ENCODE measurements at regions of chr2 and their contacts with region 1.

Region 1: GRCh38 chr2:155310589-155310988 is 612.1 kb downstream of the KCNJ3 start:
- DNase-seq: no peak
- ATAC-seq: no peak
- H3K4me3 Mint-ChIP-seq: no peak overlapping the region
- H3K27ac Mint-ChIP-seq: no peak overlapping the region
- H3K4me1 Mint-ChIP-seq: no peaks in the 10 kb centered on the region
- H3K27me3 Mint-ChIP-seq: no peaks in the 10 kb centered on the region

Region 2: GRCh38 chr2:154452906-154453493 is 857.6 kb before region 1 on chr2:
- CTCF ChIA-PET with region 1: no interaction called
- POLR2A ChIA-PET with region 1: no interaction called
- intact Hi-C with region 1: loop called in 1 of 2 experiments (anchors 5 kb)
- DNase-seq: no peak
- ATAC-seq: no peak
- H3K4me3 Mint-ChIP-seq: no peak overlapping the region
- H3K27ac Mint-ChIP-seq: no peak overlapping the region
- H3K4me1 Mint-ChIP-seq: peaks cover 5% of the 10 kb centered on the region
- H3K27me3 Mint-ChIP-seq: no peaks in the 10 kb centered on the region

Region 3: GRCh38 chr2:154623819-154624218 is 686.8 kb before region 1 on chr2:
- CTCF ChIA-PET with region 1: no interaction called
- POLR2A ChIA-PET with region 1: no interaction called
- intact Hi-C with region 1: loop called in 1 of 2 experiments (anchors 2 kb)
- DNase-seq: peak; percentile 20
- ATAC-seq: no peak
- H3K4me3 Mint-ChIP-seq: no peak overlapping the region
- H3K27ac Mint-ChIP-seq: no peak overlapping the region
- H3K4me1 Mint-ChIP-seq: no peaks in the 10 kb centered on the region
- H3K27me3 Mint-ChIP-seq: peaks cover 2% of the 10 kb centered on the region